Activated CD4-positive, alpha-beta T cell treated with anti-CD3 and anti-CD28 coated beads for 36 hours (primary cell): ENCODE measurements at regions of chr3 and their contacts with region 1.

Region 1: GRCh38 chr3:66236281-66236680 is 15.5 kb downstream of the SLC25A26 start:
- DNase-seq: no peak
- ATAC-seq: no peak
- H3K4me3 Mint-ChIP-seq: no peak overlapping the region
- H3K27ac Mint-ChIP-seq: no peak overlapping the region
- H3K4me1 Mint-ChIP-seq: peaks cover 29% of the 10 kb centered on the region
- H3K27me3 Mint-ChIP-seq: no peaks in the 10 kb centered on the region

Region 2: GRCh38 chr3:66220602-66221377 is 15.5 kb before region 1 on chr3 and contains the start of gene SLC25A26:
- CTCF ChIA-PET with region 1: interaction called, 3 read pairs
- POLR2A ChIA-PET with region 1: interaction called, 4 read pairs
- intact Hi-C with region 1: loop called in 1 of 2 experiments (anchors 1 kb)
- DNase-seq: peak; percentile 99
- ATAC-seq: peak; percentile 96
- H3K4me3 Mint-ChIP-seq: peak within 1 kb of the TSS; percentile 86
- H3K27ac Mint-ChIP-seq: peak within 1 kb of the TSS; percentile 92
- H3K4me1 Mint-ChIP-seq: peaks cover 48% of the 10 kb centered on the region
- H3K27me3 Mint-ChIP-seq: no peaks in the 10 kb centered on the region
- total RNA-seq, gene SLC25A26: 14.2 to 22.7 TPM